Ascending aorta (tissue), 2 donors: ENCODE measurements at regions of chr2 and their contacts with region 1.

Region 1: GRCh38 chr2:219475697-219476651 is 22.7 kb upstream of the GMPPA start:
- DNase-seq: peak in 1 of 2 donors; percentile 81
- H3K4me3 ChIP-seq: no peak overlapping the region
- H3K27ac ChIP-seq: peak overlapping the region; percentile 51 to 73
- H3K4me1 ChIP-seq: no peaks in the 10 kb centered on the region
- H3K27me3 ChIP-seq: no peaks in the 10 kb centered on the region
- CTCF ChIP-seq: peak; percentile 67 to 88 (median 87)

Region 2: GRCh38 chr2:219459460-219460311 is 16.3 kb before region 1 on chr2:
- intact Hi-C with region 1: loop called (anchors 2 kb)
- DNase-seq: peak in 1 of 2 donors; percentile 87
- H3K4me3 ChIP-seq: peak overlapping the region in 1 of 2 donors; percentile 42
- H3K27ac ChIP-seq: peak overlapping the region; percentile 91 to 94
- H3K4me1 ChIP-seq: peaks cover 35 to 63% of the 10 kb centered on the region in 2 donors
- H3K27me3 ChIP-seq: no peaks in the 10 kb centered on the region
- CTCF ChIP-seq: peak; percentile 74 to 90 (median 84)

Region 3: GRCh38 chr2:219530048-219530963 is 54.3 kb after region 1 on chr2:
- intact Hi-C with region 1: loop called (anchors 5 kb)
- DNase-seq: peak in 1 of 2 donors; percentile 88
- H3K4me3 ChIP-seq: peak overlapping the region in 1 of 2 donors; percentile 55
- H3K27ac ChIP-seq: no peak overlapping the region
- H3K4me1 ChIP-seq: no peaks in the 10 kb centered on the region
- H3K27me3 ChIP-seq: no peaks in the 10 kb centered on the region
- CTCF ChIP-seq: peak; percentile 97 to 99 (median 98)